MCF 10A (cell line): ENCODE measurements at regions of chr5 and their contacts with region 1.

Region 1: DNA sequence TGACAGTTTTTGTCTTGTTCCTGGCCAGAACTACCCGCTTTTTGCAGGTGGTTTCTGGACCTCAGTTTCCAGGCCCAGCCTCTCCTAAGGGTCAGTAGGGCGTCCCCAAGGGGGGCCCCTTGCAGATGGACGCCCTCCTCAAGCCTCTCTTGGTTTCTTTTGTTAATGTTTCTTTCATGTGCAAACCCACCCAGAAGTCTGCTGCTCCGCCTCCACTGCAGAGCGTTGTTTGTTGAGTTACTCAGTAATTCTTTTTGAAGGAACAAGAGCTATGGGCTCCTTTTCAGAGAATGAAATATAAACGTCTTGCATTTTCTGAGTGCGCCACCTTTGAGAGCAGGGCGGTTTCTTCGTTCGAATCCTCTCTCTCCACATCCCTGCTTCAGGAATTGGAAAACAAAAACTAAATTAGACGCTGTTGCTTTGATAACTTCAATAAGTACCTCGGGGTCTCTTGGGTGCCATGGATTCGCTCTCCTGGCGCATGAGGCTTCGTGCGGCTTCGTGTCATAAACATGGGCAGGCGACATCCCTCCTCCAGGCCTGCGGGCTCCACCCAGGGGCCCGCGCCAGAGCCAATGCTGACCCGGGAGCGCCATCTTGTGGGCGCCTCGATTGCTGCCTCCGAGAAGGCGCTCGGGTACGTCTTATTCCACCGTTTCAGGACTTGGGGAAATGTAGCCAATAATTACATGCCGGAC is 38.3 kb upstream of the CKMT2 start:
- DNase-seq: peak; percentile 82
- H3K4me3 Mint-ChIP-seq: no peak overlapping the region
- H3K27ac Mint-ChIP-seq: no peak overlapping the region
- H3K4me1 Mint-ChIP-seq: peaks cover 4% of the 10 kb centered on the region
- H3K27me3 Mint-ChIP-seq: peaks cover 29% of the 10 kb centered on the region
- CTCF ChIP-seq: peak; percentile 95

Region 2: GRCh38 chr5:80686757-80687156 is 508.0 kb before region 1 on chr5:
- CTCF ChIA-PET with region 1: interaction called, 22 read pairs
- POLR2A ChIA-PET with region 1: no interaction called
- intact Hi-C with region 1: loop called (anchors 10 kb)
- DNase-seq: peak; percentile 25
- H3K4me3 Mint-ChIP-seq: no peak overlapping the region
- H3K27ac Mint-ChIP-seq: no peak overlapping the region
- H3K4me1 Mint-ChIP-seq: no peaks in the 10 kb centered on the region
- H3K27me3 Mint-ChIP-seq: no peaks in the 10 kb centered on the region
- CTCF ChIP-seq: peak; percentile 29

Region 3: DNA sequence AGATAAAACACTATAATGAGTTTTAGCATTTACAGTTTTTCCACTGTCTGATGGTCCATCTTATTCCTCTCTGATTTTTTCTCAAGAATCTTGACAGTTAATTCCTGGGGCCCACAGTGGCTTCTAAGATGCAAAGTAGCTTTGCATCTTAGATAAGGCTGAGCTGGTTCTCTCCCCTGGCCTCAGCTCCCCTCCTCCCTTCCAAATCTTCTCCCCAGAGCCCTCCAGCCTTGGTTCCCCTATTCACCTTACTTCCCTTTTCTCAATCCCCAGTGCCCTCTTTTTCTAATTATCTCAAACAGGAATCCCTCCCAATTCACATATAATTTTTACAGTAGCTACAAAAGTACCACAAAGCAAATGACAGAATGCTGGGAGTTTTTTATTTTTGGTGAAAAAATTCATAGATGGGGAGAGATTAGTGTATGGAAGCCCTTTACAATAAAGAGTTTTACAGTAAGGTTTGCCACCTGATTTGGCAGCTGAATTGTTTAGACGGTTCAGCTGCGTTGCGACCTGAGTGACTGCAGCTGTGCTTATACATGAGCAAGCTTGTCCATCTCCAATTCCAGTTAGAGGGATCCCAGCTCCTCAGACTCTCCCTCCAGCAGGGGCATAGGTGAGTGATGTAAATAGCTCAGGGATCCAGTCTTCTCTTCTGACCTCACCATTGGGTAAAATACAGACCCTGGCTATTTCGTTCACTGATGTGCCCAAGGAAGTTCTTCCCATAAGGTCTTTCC is 13.0 kb before region 1 on chr5:
- CTCF ChIA-PET with region 1: interaction called, 13 read pairs
- POLR2A ChIA-PET with region 1: no interaction called
- intact Hi-C with region 1: no loop called
- DNase-seq: no peak
- H3K4me3 Mint-ChIP-seq: no peak overlapping the region
- H3K27ac Mint-ChIP-seq: no peak overlapping the region
- H3K4me1 Mint-ChIP-seq: no peaks in the 10 kb centered on the region
- H3K27me3 Mint-ChIP-seq: peaks cover 6% of the 10 kb centered on the region
- CTCF ChIP-seq: no peak

Region 4: DNA sequence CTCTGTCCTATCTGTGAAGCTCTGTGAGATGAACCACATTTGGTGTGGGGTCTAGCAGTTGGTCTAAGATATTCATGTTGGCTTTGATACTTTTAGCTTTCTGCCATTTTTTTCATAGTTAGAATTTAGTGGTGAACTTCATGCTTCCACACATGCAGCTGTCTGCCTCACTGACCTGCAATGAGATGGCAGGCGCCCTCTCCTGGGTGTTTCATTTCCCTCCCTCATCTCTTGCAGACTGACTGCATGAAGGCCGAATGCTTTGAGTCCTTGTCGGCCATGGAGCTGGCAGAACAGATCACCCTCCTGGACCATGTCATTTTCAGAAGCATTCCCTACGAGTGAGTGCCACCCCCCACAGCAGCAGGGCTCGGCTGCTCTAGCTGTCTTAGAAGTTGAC is 12.2 kb after region 1 on chr5:
- CTCF ChIA-PET with region 1: interaction called, 28 read pairs
- POLR2A ChIA-PET with region 1: no interaction called
- intact Hi-C with region 1: no loop called
- DNase-seq: peak; percentile 8
- H3K4me3 Mint-ChIP-seq: no peak overlapping the region
- H3K27ac Mint-ChIP-seq: no peak overlapping the region
- H3K4me1 Mint-ChIP-seq: no peaks in the 10 kb centered on the region
- H3K27me3 Mint-ChIP-seq: no peaks in the 10 kb centered on the region
- CTCF ChIP-seq: peak; percentile 8

Region 5: GRCh38 chr5:81268521-81269196 is 73.9 kb after region 1 on chr5:
- CTCF ChIA-PET with region 1: no interaction called
- POLR2A ChIA-PET with region 1: no interaction called
- intact Hi-C with region 1: no loop called
- DNase-seq: peak; percentile 56
- H3K4me3 Mint-ChIP-seq: no peak overlapping the region
- H3K27ac Mint-ChIP-seq: peak overlapping the region; percentile 49
- H3K4me1 Mint-ChIP-seq: peaks cover 10% of the 10 kb centered on the region
- H3K27me3 Mint-ChIP-seq: no peaks in the 10 kb centered on the region
- CTCF ChIP-seq: no peak

Region 6: DNA sequence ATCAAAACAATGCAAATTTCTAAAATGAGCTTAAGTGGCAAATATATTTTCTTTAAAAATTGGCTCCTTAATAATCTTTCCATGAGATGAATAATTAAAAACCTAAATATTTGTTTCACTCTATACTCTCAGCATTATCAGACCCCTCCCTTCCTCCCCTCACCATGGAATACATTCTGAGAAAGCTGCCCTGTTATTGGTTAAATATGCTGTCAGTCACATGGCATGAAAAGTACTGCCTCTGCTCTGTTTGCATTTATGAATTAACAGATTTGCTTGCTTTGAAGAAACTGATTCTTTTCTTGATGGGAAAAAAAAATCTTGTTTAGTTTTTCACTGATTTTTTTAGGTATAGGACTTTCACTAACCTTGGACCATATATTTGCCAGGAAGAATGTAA is 1100.4 kb after region 1 on chr5:
- CTCF ChIA-PET with region 1: no interaction called
- POLR2A ChIA-PET with region 1: no interaction called
- intact Hi-C with region 1: no loop called
- DNase-seq: no peak
- H3K4me3 Mint-ChIP-seq: no peak overlapping the region
- H3K27ac Mint-ChIP-seq: no peak overlapping the region
- H3K4me1 Mint-ChIP-seq: no peaks in the 10 kb centered on the region
- H3K27me3 Mint-ChIP-seq: no peaks in the 10 kb centered on the region
- CTCF ChIP-seq: no peak